Esophagus muscularis mucosa (tissue), 4 donors: ENCODE measurements at regions of chr4 and their contacts with region 1.

Region 1: DNA sequence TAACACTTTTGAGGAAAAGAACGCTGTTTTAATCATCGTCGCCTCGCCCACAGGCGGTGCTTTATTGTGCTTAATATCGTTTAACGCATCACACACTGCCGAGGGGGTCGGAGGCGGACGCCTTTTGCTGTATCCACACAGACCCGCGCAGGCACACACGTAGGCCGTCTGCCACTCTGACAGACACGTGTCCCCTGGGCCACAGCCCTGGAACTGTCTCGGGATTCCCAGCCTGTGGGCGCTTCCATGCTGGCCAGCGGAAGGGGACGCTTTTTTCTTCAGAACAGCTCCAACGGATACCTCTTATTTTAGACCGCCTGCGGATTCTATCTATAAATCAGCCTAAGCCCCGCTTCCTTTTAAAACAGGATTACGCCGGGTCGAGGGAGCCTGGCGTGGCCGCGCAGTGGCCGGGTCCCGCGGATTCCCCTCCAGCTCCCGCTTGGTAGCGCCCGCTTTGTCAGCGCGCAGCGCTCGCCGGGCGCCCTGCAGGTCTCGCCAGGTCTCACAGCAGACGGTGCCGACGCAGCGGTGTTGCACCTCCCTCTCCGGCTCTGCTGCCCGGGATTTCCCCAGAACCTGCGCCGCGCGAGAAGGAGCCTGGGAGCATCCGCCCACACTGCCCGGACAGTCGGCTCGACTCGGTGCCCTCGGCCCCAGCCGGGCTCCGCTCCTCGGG is at the start of gene NOCT:
- DNase-seq: peak; percentile 96
- H3K4me3 ChIP-seq: peak within 1 kb of the TSS; percentile 71 to 90 (median 83)
- H3K27ac ChIP-seq: peak within 1 kb of the TSS; percentile 90 to 95 (median 90)
- H3K4me1 ChIP-seq: peaks cover 19 to 38% (median 31%) of the 10 kb centered on the region in 4 donors
- H3K27me3 ChIP-seq: no peaks in the 10 kb centered on the region
- CTCF ChIP-seq: peak; percentile 9 to 31 (median 16)
- EP300 ChIP-seq: no peak
- POLR2A ChIP-seq: peak; percentile 74
- total RNA-seq, gene NOCT: 1.7 to 7.0 (median 2.1) TPM

Region 2: DNA sequence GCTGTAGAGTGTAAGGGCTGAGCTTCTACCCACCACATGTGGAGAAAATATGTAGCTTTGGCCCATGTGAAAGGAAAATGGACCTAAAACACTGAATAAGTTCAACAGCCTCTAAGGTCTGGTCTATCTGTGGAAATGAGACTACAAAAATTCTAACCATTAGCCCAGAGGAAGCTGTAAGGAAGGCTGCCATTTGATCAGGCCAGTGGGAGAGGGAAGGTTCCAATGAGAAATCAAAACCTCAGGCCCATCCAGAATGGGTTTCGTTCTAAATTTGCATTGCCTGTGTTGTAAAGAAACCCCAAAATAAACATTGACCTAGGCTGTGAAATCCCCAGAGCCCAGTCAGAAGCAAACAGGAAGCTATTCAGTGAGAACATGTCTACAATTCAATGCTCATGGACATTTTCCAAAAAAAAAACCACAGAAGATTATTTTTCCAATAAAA is 452.8 kb before region 1 on chr4:
- intact Hi-C with region 1: no loop called
- DNase-seq: no peak
- H3K4me3 ChIP-seq: no peak overlapping the region
- H3K27ac ChIP-seq: no peak overlapping the region
- H3K4me1 ChIP-seq: peaks cover 0 to 9% (median 2%) of the 10 kb centered on the region in 4 donors
- H3K27me3 ChIP-seq: no peaks in the 10 kb centered on the region
- CTCF ChIP-seq: no peak
- EP300 ChIP-seq: no peak
- POLR2A ChIP-seq: no peak

Region 3: DNA sequence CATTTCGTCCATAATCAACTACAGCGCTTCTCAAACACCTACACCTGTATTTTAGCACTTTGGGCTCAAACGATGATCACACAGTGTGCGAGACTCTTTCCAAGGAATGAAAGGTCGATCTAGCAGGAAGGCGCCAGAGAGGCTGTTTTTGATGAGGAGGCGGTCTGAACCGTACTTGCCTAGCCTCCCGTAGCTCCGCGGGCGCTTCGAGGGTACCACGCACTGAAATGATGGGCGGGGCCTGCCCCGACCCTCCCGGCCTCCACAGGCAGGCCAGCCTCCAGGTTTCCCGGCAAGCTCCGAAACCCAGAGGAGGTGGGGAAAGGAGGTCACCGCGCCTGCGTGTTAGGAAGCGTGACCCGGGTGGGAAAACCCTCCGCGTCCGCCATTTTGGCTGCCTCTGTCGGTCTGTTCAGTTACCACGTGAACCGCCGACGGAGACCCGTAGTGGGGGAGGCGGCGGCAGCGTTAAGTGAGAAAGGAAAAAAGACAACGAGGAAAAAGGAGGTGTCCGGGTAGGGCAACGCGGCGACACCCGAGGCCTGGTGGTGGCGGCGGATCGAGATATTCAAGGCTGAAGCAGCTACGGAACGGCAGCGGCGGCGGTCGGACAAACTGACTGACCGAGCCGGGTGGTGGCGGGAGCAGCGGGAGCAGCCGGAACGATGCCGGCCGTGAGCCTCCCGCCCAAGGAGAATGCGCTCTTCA is 285.9 kb after region 1 on chr4 and contains the start of gene NAA15:
- intact Hi-C with region 1: loop called (anchors 5 kb)
- DNase-seq: peak; percentile 99
- H3K4me3 ChIP-seq: peak within 1 kb of the TSS; percentile 82 to 99 (median 92)
- H3K27ac ChIP-seq: peak within 1 kb of the TSS; percentile 88 to 97 (median 93)
- H3K4me1 ChIP-seq: peaks cover 15 to 67% (median 53%) of the 10 kb centered on the region in 4 donors
- H3K27me3 ChIP-seq: no peaks in the 10 kb centered on the region
- CTCF ChIP-seq: no peak
- EP300 ChIP-seq: no peak
- POLR2A ChIP-seq: peak; percentile 58
- total RNA-seq, gene NAA15: 21.0 to 32.1 (median 25.3) TPM